ENCODE measurements at regions of chr7 and their contacts with region 1.

Region 1: DNA sequence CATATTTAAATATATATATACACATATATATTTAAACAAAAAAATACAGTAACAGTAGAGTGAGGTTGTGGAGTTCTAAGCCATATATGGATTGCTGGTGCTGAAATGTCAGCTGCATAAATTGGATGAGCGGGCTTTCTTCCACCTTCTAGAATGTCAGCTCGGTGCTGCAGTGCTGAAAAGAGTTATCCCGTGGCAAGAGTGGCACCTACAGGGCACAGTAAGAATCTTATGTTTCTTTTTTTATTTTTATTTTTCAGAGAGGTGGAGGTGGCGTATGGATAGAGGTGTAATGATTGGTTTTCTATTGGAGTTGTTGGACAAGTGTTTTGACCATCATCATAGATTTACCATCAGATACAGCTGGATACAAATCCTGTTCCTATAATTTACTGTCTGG is 86.2 kb upstream of the DYNC1I1 start:
- DNase-seq: no peak
- ATAC-seq: peak; percentile 30

Region 2: GRCh38 chr7:95511716-95512260 is 174.3 kb before region 1 on chr7:
- intact Hi-C with region 1: loop called (anchors 5 kb)
- DNase-seq: peak; percentile 37
- ATAC-seq: peak; percentile 94

Region 3: GRCh38 chr7:95527033-95527775 is 158.9 kb before region 1 on chr7:
- intact Hi-C with region 1: loop called (anchors 5 kb)
- DNase-seq: peak; percentile 35
- ATAC-seq: peak; percentile 91

Region 4: GRCh38 chr7:95545078-95545498 is 141.0 kb before region 1 on chr7:
- intact Hi-C with region 1: loop called (anchors 5 kb)
- DNase-seq: no peak
- ATAC-seq: peak; percentile 82

Region 5: GRCh38 chr7:95596198-95597063 is 89.7 kb before region 1 on chr7 and contains the start of gene PDK4:
- intact Hi-C with region 1: loop called (anchors 5 kb)
- DNase-seq: peak; percentile 97
- ATAC-seq: peak; percentile 89
- total RNA-seq, gene PDK4: 289 TPM

Region 6: DNA sequence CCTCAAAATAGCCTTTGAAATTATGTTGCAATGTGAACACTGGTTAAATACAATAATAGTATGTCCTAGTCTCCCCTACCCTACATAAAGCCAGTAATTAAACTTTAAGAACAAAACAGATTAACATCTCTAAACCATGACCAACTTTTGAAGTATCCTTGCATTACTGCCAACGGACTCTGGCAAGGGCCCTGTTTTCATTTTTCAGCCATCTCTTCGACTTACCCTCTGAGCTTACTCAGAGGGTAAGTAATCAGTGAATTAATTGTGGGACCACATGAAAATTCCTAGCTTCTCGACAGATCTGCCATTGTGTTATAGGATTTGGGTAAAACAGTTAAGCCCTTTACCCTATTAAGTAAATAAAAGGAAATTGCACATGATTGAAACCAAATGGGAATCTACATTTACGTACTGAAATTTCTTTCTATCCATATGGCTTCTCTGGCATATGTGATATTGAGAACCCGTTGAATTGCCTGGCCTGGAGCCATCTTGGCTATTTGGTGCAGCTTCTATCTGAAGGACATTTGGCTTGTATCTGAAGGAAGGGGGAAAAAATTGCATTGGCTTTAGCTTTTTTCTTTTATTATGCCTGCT is 125.8 kb after region 1 on chr7:
- intact Hi-C with region 1: no loop called
- DNase-seq: no peak
- ATAC-seq: no peak

Measured in left ventricle myocardium superior (tissue), 1 donor.